Thyroid gland (tissue), 4 donors: ENCODE measurements at regions of chr19 and their contacts with region 1.

Region 1: DNA sequence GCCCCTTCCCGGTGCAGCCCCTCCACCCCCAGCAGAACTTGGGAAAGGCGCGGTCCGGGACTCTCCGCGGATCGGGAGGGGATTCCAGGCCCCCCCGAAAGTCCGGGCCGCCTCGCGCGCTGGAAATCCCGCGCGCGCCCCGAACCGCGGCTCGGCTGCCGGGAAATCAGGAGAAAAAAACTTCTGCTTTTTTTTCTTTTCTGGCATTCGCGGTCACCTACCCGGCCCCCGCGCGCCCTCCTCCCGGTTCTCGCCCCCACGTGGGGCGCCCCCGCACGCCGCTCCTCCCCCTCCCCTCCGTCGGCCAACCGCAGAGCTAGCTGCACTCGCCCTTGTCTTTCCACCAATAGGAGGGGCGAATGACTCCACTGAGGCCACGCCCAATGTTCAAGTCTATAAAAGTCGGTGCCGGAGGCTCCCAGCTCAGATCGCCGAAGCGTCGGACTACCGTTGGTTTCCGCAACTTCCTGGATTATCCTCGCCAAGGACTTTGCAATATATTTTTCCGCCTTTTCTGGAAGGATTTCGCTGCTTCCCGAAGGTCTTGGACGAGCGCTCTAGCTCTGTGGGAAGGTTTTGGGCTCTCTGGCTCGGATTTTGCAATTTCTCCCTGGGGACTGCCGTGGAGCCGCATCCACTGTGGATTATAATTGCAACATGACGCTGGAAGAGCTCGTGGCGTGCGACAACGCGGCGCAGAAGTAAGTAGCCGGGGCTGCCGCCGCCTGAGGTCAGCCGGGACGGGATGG is at the start of gene GADD45B:
- DNase-seq: peak; percentile 98
- H3K4me3 ChIP-seq: peak within 1 kb of the TSS; percentile 93 to 100 (median 99)
- H3K27ac ChIP-seq: peak within 1 kb of the TSS; percentile 96 to 99 (median 98)
- H3K4me1 ChIP-seq: peaks cover 16 to 31% of the 10 kb centered on the region in 2 donors
- H3K27me3 ChIP-seq: no peaks in the 10 kb centered on the region
- CTCF ChIP-seq: no peak
- POLR2A ChIP-seq: peak; percentile 100
- total RNA-seq, gene GADD45B: 148 to 250 (median 195) TPM

Region 2: DNA sequence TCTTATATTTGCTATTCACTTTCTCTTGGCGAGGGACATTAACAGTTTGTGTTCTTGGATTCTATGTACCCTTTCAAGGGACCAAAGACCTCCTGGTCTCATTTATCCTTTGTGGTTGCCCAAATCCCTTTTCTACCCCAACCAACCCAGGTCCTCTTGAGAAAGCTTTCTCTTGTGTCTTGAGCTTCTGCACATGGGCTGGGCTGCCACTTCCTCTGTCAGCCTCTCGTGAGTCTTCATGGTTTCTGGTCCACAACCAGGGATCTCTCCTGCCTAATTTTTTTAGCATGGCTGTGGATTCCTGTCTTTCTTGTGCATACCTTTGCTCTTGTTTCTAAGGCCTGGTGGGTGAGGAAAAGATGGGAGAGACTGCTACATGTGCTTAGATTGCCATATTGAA is 63.4 kb before region 1 on chr19:
- intact Hi-C with region 1: no loop called
- DNase-seq: no peak
- H3K4me3 ChIP-seq: no peak overlapping the region
- H3K27ac ChIP-seq: no peak overlapping the region
- H3K4me1 ChIP-seq: no peaks in the 10 kb centered on the region
- H3K27me3 ChIP-seq: no peaks in the 10 kb centered on the region
- CTCF ChIP-seq: no peak
- POLR2A ChIP-seq: no peak

Region 3: DNA sequence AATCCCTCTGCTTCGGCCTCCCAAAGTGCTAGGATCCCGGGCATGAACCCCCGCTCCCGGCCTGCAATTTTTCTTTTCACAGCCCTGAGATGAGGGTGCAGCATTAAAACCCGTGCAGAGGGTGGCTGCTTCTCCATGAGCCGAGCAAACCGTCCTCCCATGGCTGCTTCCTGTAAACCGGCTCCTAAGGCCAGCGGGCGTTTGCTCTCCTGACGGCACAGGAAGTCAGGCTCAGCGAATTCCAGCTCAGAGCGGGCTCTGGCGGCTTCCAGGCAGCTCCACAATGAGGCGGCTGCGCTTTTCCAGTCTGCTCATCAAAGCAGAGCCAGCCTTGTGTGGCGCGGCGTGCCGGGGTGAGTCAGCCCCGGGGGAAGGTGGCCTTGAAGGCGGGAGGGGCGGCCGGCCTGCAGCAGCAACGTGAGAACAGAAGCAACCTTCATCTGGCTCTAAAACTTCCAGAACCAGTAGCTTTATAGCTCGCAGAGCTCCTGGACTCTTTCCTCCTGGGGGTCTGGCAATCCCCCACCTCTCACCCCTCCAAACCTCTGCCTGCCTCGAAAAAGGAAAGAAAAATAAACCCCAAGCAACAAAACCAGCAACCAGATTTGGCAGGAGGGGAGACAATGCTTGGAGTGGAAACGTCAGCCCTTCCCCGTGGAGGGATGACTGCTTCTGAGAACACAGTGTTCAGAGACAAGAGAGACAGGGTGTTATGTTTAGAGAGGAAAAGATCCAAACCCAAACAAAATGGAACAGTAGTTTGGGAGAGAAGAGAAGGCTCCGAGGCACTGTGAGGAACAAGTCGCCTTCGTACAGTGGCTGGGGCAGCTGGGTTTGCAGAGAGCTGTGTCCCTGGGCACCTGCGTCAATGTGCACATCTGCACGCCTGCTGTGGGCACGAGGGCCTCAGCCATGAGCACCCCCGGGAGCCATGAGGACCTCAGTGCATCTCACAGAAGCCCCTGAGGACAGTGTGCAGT is 67.9 kb after region 1 on chr19:
- intact Hi-C with region 1: loop called (anchors 5 kb)
- DNase-seq: peak; percentile 98 to 99
- H3K4me3 ChIP-seq: no peak overlapping the region
- H3K27ac ChIP-seq: peak overlapping the region; percentile 99 to 100 (median 100)
- H3K4me1 ChIP-seq: peaks cover 66 to 72% of the 10 kb centered on the region in 2 donors
- H3K27me3 ChIP-seq: no peaks in the 10 kb centered on the region
- CTCF ChIP-seq: peak in 3 of 6 experiments; percentile 3 to 23 (median 17)
- POLR2A ChIP-seq: peak in 1 of 2 donors; percentile 79

Region 4: DNA sequence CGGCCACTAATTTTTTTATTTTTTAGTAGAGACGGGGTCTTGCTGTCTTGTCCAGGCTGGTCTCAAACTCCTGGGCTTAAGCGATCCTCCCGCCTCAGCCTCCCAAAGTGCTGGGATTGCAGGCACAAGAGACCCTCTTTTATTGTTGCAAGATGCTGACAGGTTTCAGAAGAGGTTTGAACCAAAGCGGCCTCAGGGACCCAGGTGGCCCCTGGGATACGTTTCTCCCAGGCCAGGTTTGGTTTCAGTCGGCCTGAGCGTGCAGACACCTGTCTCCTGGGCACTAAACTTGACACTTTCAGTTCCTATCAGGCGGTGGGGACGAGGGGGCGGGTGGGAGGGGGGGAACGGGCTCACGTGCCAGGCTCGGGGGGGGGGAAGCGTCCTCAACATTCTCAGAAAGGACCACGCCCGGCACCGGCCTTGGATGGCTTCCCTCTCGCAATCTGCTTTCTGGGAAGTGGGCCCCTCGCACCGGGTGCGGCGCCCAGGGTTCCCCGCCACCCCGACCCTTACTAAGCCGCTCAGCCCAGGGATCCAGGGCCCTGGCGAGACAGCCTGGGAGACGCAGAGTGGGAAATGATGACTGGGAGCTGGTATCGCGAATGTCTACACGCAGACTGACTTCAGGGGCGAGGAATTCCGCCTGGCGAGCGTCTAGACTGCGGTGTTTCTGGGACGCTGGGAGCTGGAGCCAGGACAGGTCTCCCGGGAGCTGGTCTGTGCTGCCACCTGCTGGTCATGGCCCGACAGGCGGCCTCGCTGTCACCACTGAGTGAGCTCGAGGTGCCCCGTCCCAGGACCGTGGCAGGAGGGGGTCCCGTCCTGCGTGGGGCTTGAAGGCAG is 135.0 kb after region 1 on chr19:
- intact Hi-C with region 1: loop called (anchors 5 kb)
- DNase-seq: peak; percentile 94 to 95
- H3K4me3 ChIP-seq: peak overlapping the region in 1 of 3 donors; percentile 30
- H3K27ac ChIP-seq: peak overlapping the region; percentile 92 to 95 (median 94)
- H3K4me1 ChIP-seq: peaks cover 10 to 20% of the 10 kb centered on the region in 2 donors
- H3K27me3 ChIP-seq: no peaks in the 10 kb centered on the region
- CTCF ChIP-seq: peak; percentile 95 to 98 (median 97)
- POLR2A ChIP-seq: peak in 1 of 2 donors; percentile 68

Region 5: DNA sequence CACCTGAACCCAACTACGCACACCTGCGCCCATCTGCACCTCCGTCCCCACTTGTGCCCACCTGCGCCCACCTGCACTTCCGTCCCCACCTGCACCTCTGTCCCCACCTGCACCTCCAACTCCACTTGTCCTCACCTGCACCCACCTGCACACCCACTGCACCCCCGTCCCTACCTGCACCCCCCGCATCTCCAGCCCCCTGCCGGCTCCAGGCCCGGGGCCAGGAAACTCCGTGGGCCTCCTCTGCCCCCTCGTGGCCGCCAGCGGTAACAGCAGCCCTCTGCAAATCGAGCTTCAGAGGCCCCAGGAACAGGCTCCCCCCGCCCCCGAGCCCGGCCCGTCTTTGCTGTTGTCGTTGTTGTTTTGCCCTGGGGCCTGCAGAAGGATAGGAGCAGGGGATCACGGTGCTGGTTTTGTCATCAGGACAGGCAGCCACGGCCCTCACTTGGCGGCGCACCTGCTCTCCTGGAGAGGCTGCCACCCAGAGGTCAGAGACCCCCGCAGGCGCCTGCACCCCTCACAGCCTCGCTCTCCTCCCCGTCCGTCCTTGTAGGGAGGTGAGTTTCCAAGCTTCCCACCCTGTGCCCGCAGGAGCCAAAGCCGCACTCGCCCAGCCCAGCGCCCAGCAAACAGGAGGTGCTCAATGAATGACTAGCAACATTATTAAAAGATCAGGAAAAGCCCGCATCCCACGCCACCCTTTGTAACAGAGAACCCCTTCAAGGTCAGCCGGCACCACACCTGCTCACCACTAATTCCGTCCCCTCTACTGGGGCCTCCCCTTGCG is 161.2 kb after region 1 on chr19:
- intact Hi-C with region 1: loop called (anchors 2 kb)
- DNase-seq: peak; percentile 82
- H3K4me3 ChIP-seq: no peak overlapping the region
- H3K27ac ChIP-seq: peak overlapping the region; percentile 96 to 100 (median 98)
- H3K4me1 ChIP-seq: peaks cover 42 to 53% of the 10 kb centered on the region in 2 donors
- H3K27me3 ChIP-seq: no peaks in the 10 kb centered on the region
- CTCF ChIP-seq: peak; percentile 48 to 98 (median 90)
- POLR2A ChIP-seq: peak in 1 of 2 donors; percentile 14